GM12878 (cell line): ENCODE measurements at regions of chr17 and their contacts with region 1.

Region 1: GRCh38 chr17:75673487-75673886 is 6.3 kb downstream of the SAP30BP start:
- DNase-seq: no peak
- ATAC-seq: no peak
- H3K4me3 ChIP-seq: no peak overlapping the region
- H3K27ac ChIP-seq: no peak overlapping the region
- H3K4me1 ChIP-seq: peaks cover 2% of the 10 kb centered on the region
- H3K27me3 ChIP-seq: no peaks in the 10 kb centered on the region
- CTCF ChIP-seq: no peak
- EP300 ChIP-seq: no peak
- POLR2A ChIP-seq: no peak
- RAD21 ChIP-seq: no peak

Region 2: GRCh38 chr17:75205037-75205792 is 468.3 kb before region 1 on chr17 and contains the start of gene NUP85:
- CTCF ChIA-PET with region 1: no interaction called
- POLR2A ChIA-PET with region 1: no interaction called
- RAD21 ChIA-PET with region 1: no interaction called
- SMC1A ChIA-PET with region 1: no interaction called
- in situ Hi-C with region 1: no loop called
- intact Hi-C with region 1: no loop called
- DNase-seq: peak; percentile 66
- ATAC-seq: peak; percentile 91
- H3K4me3 ChIP-seq: peak within 1 kb of the TSS; percentile 77
- H3K27ac ChIP-seq: peak within 1 kb of the TSS; percentile 98
- H3K4me1 ChIP-seq: no peaks in the 10 kb centered on the region; the same call in 1 of the 2 replicates
- H3K27me3 ChIP-seq: no peaks in the 10 kb centered on the region
- CTCF ChIP-seq: no peak
- EP300 ChIP-seq: peak in 1 of 2 experiments; percentile 45; a peak in 1 of 4 replicates
- POLR2A ChIP-seq: peak; percentile 93
- RAD21 ChIP-seq: no peak
- polyA plus RNA-seq, gene NUP85: 127 to 135 TPM

Region 3: DNA sequence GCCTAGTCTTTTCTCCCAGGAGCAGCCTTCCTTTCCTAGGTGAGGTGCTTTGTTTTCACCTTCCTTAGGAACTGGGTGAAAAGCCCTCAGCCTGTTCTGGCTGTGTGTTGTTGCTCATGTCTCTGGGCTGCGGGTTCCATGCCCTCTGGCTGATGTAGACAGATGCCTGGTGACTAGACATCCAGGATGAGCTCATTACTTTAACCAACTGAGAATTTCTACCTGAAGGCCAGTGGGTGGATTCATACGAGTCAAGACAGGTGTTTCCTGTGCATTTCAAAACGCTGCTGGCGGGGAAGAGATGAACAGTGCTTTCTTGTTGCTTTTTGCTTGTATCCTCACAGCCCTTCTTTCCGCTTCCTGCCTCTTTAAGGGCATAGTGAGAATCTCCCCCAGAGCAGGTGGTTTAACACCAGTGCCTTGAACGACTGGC is 16.0 kb after region 1 on chr17:
- CTCF ChIA-PET with region 1: interaction called, 62 read pairs
- POLR2A ChIA-PET with region 1: interaction called, 7 read pairs
- RAD21 ChIA-PET with region 1: interaction called, 4 read pairs
- SMC1A ChIA-PET with region 1: interaction called, 8 read pairs
- in situ Hi-C with region 1: no loop called
- intact Hi-C with region 1: no loop called
- DNase-seq: peak; percentile 60
- ATAC-seq: peak; percentile 53
- H3K4me3 ChIP-seq: 0 out of 2 replicates have a peak overlapping the region, but pooled peaks have one; percentile 3
- H3K27ac ChIP-seq: peak overlapping the region; percentile 92
- H3K4me1 ChIP-seq: peaks cover 53% of the 10 kb centered on the region
- H3K27me3 ChIP-seq: no peaks in the 10 kb centered on the region
- CTCF ChIP-seq: no peak
- EP300 ChIP-seq: no peak
- POLR2A ChIP-seq: no peak
- RAD21 ChIP-seq: no peak